RWPE1 (cell line): ENCODE measurements at regions of chr2 and their contacts with region 1.

Region 1: DNA sequence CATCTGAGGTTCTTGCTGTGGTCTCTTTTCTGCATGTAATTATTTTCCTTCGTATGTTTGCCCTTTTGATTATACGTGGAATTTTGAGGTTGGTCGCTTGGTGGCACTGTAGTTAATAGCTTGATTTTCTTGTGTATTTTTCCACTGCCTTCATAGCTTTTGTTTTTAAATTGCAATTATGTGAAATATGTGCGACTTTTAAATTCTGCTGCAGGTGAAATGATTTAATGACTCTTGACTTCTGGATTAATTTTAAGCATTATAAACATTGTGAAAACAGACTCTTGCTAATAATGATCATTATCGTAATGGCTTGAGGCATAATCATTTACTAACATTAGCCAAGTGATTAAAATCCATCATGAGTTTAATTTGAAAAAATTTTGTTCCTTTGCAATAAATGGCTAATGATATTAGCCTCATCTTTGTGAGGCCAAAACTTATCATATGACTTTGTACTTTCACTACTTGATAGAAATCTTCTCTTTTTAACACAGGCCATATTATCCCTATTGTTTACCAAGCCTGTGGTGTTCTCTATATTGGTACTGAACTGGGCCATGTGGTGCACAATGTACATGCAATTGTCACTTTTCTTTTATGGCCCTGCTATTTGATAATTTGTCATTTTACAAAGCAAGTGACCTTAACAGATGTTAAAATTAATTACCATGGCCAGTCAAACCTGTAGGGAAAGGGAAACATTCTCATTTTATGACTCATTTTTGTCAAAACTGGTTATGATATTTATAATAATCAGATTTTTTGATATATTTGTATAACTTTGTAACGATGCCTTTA is 62.8 kb upstream of the NEUROD1 start:
- DNase-seq: peak; percentile 42
- H3K27ac ChIP-seq: no peak overlapping the region
- CTCF ChIP-seq: peak; percentile 68

Region 2: DNA sequence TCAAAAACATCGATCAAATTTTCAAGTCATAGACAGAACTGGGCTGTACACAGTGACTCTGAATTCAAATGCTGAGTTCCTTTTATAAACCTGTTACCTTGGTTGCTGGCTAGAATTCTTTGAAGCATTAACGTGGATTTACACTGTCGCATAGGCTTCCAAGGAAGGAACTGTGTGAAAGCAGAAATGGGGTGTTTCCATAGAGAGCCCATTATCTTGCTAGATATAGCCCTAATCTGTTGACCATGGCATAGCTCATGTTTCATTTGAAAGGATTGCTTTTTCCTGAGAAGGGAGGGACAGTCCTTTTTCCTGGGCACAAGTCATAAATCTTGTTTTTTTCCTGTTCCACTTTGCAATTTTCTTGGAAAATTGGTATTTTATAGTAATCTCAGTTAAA is 11.0 kb after region 1 on chr2:
- CTCF ChIA-PET with region 1: no interaction called
- POLR2A ChIA-PET with region 1: no interaction called
- DNase-seq: no peak
- H3K27ac ChIP-seq: no peak overlapping the region
- CTCF ChIP-seq: no peak

Region 3: DNA sequence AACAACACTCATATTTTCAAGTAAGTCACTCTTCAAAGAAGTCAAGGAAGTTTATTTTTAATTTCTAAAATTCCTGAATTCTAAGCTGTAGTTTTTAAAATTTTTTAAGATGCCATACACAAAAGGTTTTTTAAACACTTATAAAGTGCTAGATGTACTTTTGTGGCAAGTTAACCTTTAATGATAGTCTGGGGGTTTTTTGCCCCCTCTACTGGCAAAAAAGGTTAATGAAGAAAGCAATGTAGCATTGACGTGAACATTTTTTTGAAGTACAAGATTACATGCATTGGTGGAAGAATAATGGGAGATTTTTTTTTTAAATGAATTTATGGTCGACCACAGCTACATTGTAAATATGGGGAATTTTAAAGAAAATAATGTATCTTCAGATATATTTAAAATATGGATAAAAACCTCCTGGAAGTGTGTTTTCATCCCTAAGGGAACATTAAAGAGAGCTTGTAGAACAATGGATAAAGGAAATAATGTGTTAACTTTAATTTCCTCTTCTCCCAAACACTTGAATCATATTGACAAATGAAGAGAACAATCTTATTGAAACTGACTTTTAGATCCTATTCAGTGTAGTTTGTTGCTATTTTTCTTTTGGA is 161.0 kb after region 1 on chr2:
- CTCF ChIA-PET with region 1: interaction called, 11 read pairs
- POLR2A ChIA-PET with region 1: no interaction called
- DNase-seq: peak; percentile 34
- H3K27ac ChIP-seq: no peak overlapping the region
- CTCF ChIP-seq: peak; percentile 64

Region 4: GRCh38 chr2:182077451-182078142 is 334.5 kb after region 1 on chr2:
- CTCF ChIA-PET with region 1: interaction called, 13 read pairs
- POLR2A ChIA-PET with region 1: no interaction called
- DNase-seq: peak; percentile 41
- H3K27ac ChIP-seq: no peak overlapping the region
- CTCF ChIP-seq: peak; percentile 79